Posterior cingulate gyrus (tissue), 11 donors: ENCODE measurements at regions of chrX and their contacts with region 1.

Region 1: GRCh38 chrX:58025979-58026378 is 115.7 kb upstream of the ZXDA start:
- DNase-seq: peak in 4 of 10 donors; percentile 9 to 43 (median 18)

Region 2: DNA sequence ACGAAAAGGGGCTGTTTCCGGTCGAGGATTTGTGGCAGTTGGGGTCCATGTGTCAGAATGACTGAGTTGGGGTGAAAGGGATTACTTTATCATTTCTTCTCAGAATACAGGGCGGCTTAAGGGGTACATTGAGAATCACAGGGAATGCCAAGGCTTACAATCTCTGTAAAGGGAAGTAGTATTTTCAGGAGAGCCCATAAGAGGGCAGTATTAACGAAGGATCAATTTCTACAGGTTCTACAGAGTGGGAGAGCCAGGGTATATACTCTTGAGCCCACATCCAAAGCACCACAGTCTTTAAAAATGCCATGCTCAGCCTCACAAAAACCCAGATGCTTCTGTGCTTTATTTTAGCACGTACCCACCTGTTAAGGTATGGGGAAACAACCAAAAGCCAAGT is 48.0 kb before region 1 on chrX:
- intact Hi-C with region 1: loop called (anchors 10 kb)
- DNase-seq: no peak